Activated naive CD4-positive, alpha-beta T cell treated with anti-CD3 and anti-CD28 coated beads for 36 hours (primary cell): ENCODE measurements at regions of chr3 and their contacts with region 1.

Region 1: DNA sequence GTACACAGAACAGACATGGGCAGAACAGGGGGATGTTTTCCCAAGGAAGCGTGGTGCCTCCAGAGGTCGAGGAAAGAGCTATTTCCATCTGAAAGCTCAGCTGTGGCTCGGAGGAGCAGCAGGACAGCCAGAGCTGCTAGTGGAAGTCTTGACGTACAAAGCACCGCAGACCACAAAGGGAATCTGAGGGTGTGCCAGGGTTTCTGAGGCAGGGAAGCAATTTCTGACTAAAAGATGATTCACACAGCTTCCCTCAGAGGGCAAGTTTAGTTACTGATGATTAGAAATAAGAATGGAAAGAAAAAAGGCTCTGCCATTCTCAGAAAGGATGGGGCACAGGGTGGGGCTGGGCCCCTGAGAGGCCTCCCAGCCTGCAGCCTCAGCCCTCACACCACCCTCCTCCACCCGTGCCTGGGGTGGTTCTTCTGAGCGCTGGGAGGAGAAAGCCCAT is 45.8 kb upstream of the SEC13 start:
- DNase-seq: peak; percentile 67
- H3K4me3 Mint-ChIP-seq: no peak overlapping the region
- H3K27ac Mint-ChIP-seq: peak overlapping the region; percentile 2
- H3K4me1 Mint-ChIP-seq: peaks cover 37% of the 10 kb centered on the region
- H3K27me3 Mint-ChIP-seq: peaks cover 10% of the 10 kb centered on the region

Region 2: GRCh38 chr3:10310578-10310977 is 56.1 kb before region 1 on chr3:
- CTCF ChIA-PET with region 1: no interaction called
- intact Hi-C with region 1: no loop called
- DNase-seq: no peak
- H3K4me3 Mint-ChIP-seq: no peak overlapping the region
- H3K27ac Mint-ChIP-seq: peak overlapping the region; percentile 68
- H3K4me1 Mint-ChIP-seq: peaks cover 10% of the 10 kb centered on the region
- H3K27me3 Mint-ChIP-seq: no peaks in the 10 kb centered on the region

Region 3: DNA sequence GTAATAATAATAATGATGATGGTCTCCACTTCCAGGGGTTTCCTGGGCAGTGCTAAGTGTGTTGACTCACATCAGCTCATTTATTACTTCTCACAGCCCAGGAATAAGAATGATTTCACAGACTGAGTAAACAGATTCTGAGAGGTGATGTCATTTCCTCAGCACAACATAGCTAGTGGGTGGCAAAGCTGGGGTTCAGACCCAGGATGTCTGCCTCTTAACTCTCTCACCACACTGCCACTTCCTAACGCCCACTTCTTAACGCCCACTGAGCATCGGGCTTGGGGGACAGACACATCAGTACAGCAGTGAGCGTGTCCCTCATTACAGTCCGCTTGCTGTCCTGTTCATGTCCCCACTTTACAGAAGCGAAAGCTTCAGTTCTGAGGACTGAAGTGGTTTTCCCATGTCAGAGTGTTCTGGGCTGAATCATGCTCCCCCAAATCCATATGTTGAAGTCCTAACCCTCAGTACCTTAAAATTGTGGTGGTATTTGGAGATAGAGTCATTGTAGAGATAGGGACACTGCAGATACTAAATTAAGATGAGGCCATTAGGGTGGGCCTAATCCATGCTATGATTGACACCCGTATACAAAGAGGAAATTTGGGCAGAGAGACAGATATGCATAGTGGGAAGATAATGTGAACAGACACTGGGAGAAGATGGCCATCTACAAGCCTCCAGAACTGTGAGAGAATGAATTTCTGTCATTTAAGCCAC is 70.8 kb after region 1 on chr3:
- CTCF ChIA-PET with region 1: interaction called, 3 read pairs
- intact Hi-C with region 1: loop called (anchors 1 kb)
- DNase-seq: peak; percentile 84
- H3K4me3 Mint-ChIP-seq: no peak overlapping the region
- H3K27ac Mint-ChIP-seq: peak overlapping the region; percentile 48
- H3K4me1 Mint-ChIP-seq: peaks cover 26% of the 10 kb centered on the region
- H3K27me3 Mint-ChIP-seq: no peaks in the 10 kb centered on the region

Region 4: DNA sequence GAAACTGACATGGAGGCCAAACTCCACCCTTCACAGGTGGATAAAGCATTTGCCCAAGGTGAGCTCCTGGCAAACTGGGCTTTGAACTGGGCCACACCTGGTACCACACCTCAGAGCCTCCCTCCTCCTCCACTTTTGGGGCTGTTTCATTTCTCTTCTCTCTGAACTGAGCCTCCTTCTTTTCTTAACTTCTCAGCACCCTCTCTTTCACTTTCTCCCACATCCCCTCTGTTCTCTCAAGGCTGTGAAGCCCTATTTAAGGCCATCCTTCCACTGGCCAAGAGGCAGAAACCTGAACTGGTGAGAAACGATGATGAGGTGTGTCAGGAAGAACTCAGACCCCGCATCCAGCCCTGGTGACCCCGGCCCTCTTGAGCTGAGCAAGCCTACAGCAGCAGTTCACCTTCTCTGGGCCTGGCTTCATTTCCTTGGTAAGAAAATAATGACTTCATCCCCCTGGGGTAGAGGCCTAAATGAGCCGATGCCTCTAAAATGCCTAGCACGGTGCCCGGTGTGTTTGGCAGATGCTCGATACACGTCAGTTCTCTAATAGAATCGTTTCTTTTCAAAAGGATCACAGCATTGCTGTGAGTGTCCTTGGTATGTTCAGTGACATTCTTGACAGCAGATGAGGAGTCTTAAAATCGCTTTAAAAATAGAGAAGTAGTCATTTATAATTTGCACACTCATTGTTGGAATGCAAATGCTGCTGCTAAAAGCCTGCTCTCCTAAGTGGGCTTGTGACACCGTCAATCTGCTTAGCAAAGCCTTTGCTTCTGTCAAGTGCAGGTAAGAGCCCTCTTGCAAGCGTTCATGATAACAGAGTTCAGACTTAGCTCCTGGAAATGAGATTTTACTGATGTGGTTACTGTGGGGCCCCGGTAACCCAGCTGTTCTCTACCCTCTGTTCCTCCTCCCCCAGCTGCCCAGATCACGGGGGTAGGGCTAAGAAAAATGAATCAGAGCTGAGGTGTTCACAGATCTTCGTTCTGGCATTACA is 236.4 kb after region 1 on chr3:
- CTCF ChIA-PET with region 1: no interaction called
- intact Hi-C with region 1: loop called (anchors 5 kb)
- DNase-seq: peak; percentile 81
- H3K4me3 Mint-ChIP-seq: no peak overlapping the region
- H3K27ac Mint-ChIP-seq: no peak overlapping the region
- H3K4me1 Mint-ChIP-seq: peaks cover 35% of the 10 kb centered on the region
- H3K27me3 Mint-ChIP-seq: peaks cover 15% of the 10 kb centered on the region

Region 5: DNA sequence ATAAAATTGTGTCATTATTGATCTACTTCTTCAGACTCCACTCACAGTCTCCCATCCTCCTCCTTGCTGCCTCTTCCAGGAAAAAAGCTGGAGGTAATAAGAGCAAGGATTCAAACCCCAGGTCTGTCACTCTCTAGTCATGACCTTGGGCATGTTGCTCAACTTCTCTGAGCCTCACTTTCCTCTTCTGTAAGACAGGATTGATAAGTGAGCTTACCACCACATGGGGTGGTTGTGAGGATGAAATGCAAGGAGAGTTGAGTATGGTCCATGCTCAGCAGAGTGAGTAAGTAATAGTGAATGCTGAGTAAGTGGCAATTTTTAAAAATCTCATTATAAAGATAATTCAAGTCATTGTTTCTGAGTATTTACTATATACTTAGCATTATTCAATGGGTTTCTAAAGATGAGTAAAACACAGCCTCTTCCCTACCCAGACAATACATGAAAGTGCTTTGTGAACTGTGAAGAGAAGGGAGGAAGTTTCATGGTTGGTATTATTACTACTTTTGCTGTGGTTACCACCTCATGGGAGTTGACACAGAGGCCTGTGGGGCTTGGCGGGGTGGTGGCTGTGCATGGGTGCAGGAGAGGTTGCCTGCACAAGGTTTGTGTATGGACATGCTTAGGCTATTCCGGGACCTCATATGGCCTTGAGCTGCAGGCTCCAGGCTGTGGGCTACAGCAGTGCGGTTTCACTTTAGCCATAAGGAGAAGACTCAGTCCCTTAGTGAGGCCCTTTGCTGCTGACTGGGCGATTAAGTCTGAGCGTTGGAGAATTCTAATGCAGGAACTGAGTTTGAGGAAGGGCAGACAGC is 479.4 kb after region 1 on chr3:
- CTCF ChIA-PET with region 1: no interaction called
- intact Hi-C with region 1: loop called (anchors 1 kb)
- DNase-seq: peak; percentile 25
- H3K4me3 Mint-ChIP-seq: no peak overlapping the region
- H3K27ac Mint-ChIP-seq: no peak overlapping the region
- H3K4me1 Mint-ChIP-seq: peaks cover 8% of the 10 kb centered on the region
- H3K27me3 Mint-ChIP-seq: peaks cover 43% of the 10 kb centered on the region